HEK293 (cell line): ENCODE measurements at regions of chr6 and their contacts with region 1.

Region 1: GRCh38 chr6:100116411-100117194 is 122.6 kb upstream of the MCHR2 start:
- H3K4me3 ChIP-seq: no peak overlapping the region
- H3K27ac ChIP-seq: no peak overlapping the region
- H3K4me1 ChIP-seq: no peaks in the 10 kb centered on the region
- CTCF ChIP-seq: no peak; the same call in 1 of the 2 replicates

Region 2: GRCh38 chr6:99993533-99994251 is 122.9 kb before region 1 on chr6 and contains the start of gene MCHR2:
- CTCF ChIA-PET with region 1: no interaction called
- POLR2A ChIA-PET with region 1: no interaction called
- H3K4me3 ChIP-seq: peak within 1 kb of the TSS; percentile 36
- H3K27ac ChIP-seq: no peak within 1 kb of the TSS; the same call in 1 of the 2 replicates
- H3K4me1 ChIP-seq: no peaks in the 10 kb centered on the region
- CTCF ChIP-seq: no peak

Region 3: DNA sequence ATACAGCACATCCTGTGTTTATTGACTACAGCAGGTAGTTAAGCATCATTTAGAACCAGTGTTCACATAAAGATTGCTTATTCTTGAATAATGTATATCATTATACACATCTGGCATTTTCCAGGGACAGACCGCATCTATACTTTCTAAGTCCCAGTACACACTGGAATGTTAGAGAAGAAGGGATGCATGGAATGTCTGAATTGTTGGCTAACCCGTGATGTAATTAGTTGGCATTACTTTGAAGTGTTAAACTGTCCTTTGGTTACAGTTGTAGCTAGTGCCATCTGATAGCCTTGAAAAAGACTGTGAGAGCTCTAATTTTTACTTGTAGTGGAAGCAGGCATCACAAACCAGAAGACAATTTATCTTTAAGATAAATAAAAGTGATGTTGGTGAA is 92.8 kb before region 1 on chr6:
- CTCF ChIA-PET with region 1: no interaction called
- POLR2A ChIA-PET with region 1: no interaction called
- H3K4me3 ChIP-seq: no peak overlapping the region
- H3K27ac ChIP-seq: no peak overlapping the region
- H3K4me1 ChIP-seq: no peaks in the 10 kb centered on the region
- CTCF ChIP-seq: no peak

Region 4: GRCh38 chr6:100057941-100058340 is 58.7 kb before region 1 on chr6:
- CTCF ChIA-PET with region 1: no interaction called
- POLR2A ChIA-PET with region 1: no interaction called
- H3K4me3 ChIP-seq: no peak overlapping the region
- H3K27ac ChIP-seq: no peak overlapping the region
- H3K4me1 ChIP-seq: no peaks in the 10 kb centered on the region
- CTCF ChIP-seq: no peak

Region 5: GRCh38 chr6:100105138-100105753 is 11.4 kb before region 1 on chr6:
- CTCF ChIA-PET with region 1: interaction called, 21 read pairs
- POLR2A ChIA-PET with region 1: no interaction called
- H3K4me3 ChIP-seq: no peak overlapping the region
- H3K27ac ChIP-seq: no peak overlapping the region
- H3K4me1 ChIP-seq: no peaks in the 10 kb centered on the region
- CTCF ChIP-seq: no peak

Region 6: DNA sequence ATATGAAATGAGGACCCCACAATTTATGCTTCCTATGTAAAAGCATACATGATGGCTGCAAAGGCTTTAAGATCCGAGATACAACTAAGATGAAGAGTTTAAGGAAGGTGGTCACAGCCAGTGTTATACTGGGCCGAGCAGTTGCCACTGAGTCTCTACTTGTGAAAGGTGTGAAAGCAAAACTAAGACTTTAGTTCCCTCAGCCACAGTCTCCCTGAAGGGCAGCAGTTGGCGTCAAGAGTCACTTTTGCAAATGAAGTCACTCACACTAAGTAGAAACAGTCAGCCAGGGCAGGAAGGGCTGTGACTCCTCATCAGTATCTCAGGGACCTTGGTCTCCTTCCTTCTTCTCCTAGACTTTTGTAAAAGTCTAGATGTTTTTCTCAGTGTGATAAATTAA is 69.0 kb after region 1 on chr6:
- CTCF ChIA-PET with region 1: no interaction called
- POLR2A ChIA-PET with region 1: no interaction called
- H3K4me3 ChIP-seq: no peak overlapping the region
- H3K27ac ChIP-seq: no peak overlapping the region
- H3K4me1 ChIP-seq: no peaks in the 10 kb centered on the region
- CTCF ChIP-seq: no peak

Region 7: GRCh38 chr6:100464903-100465700 is 348.5 kb after region 1 on chr6 and contains the start of gene SIM1:
- CTCF ChIA-PET with region 1: interaction called, 21 read pairs
- POLR2A ChIA-PET with region 1: interaction called, 4 read pairs
- H3K4me3 ChIP-seq: peak within 1 kb of the TSS; percentile 60
- H3K27ac ChIP-seq: peak within 1 kb of the TSS; percentile 75
- H3K4me1 ChIP-seq: peaks cover 3% of the 10 kb centered on the region
- CTCF ChIP-seq: peak; percentile 13; the same call in 1 of the 2 replicates

Region 8: DNA sequence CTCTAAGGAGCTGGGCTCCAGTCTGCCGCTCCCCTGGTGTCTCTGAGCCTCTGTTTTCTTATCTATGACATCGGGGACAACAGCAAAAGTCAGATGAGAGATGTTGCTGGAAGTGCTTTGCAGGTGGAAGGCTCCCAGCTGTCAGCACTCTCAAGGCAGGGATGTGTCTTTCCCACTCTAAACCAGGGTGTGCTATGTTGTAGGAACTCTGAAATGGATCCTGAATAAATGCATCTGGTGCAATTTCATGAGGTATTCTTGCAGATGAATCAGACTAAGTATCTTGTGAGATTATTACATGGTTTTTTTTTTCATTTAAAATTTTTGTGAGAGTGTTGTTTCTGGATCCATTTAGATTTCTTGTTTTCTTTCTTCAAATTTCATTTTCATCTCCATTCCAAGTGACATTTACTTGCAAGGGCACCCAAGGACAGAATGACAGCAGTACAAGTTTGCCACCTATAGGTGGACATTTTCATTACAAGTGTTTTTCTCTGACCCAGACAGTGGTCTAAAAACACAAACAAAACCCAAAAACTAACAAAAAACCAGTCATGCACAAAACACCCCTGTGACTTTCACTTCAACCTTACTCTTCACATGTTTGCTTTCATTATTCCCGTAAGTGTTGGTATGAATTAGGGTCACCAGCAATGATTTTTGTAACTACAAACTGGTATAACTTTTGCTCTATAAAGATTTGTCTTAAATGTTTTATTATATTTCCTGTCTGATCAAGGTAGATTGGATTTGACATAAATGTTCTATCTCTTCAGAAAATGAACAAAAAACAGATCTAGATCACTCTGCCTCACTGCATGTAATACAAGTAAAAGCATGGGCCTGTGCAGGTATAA is 362.8 kb after region 1 on chr6:
- CTCF ChIA-PET with region 1: interaction called, 73 read pairs
- POLR2A ChIA-PET with region 1: no interaction called
- H3K4me3 ChIP-seq: no peak overlapping the region
- H3K27ac ChIP-seq: no peak overlapping the region
- H3K4me1 ChIP-seq: no peaks in the 10 kb centered on the region
- CTCF ChIP-seq: peak; percentile 53; the same call in 1 of the 2 replicates

Region 9: DNA sequence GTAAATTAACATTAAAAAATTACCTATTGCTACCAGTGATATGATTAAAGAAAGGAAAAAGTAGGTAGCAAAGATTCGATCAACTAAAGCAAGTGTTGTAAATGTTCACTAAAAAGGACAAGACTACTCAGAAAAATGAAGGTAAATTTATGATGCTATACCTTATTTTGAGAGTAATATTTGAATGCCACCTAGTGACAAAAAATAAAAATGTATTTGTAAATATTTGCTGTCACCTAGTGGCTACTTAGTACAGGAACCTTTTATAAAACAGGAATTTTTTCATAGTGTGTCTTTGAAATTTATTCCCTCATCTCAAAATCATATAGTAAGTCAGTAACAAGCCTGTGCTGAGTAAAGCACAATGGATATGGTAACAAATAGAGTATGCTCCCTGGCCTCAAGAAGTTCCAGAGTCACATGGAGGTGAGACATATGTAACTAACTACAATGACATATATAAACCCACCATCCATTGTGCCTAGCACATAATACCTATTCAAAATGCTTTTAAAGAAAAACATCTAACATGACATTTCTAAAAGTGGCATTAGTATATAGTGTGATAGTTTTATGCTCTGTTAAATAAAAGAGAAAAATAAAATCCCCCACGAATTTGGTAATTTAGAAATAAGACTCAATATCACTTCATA is 541.2 kb after region 1 on chr6:
- CTCF ChIA-PET with region 1: interaction called, 44 read pairs
- POLR2A ChIA-PET with region 1: no interaction called
- H3K4me3 ChIP-seq: no peak overlapping the region
- H3K27ac ChIP-seq: no peak overlapping the region
- H3K4me1 ChIP-seq: no peaks in the 10 kb centered on the region
- CTCF ChIP-seq: peak; percentile 78